Pancreas (tissue), 10 donors: ENCODE measurements at regions of chr7 and their contacts with region 1.

Region 1: GRCh38 chr7:32479574-32480200 is 10.5 kb downstream of the LSM5 start:
- DNase-seq: no peak
- ATAC-seq: peak; percentile 42 to 70 (median 64)
- H3K4me3 ChIP-seq: no peak overlapping the region
- H3K27ac ChIP-seq: no peak overlapping the region
- H3K4me1 ChIP-seq: peaks cover 4 to 8% (median 7%) of the 10 kb centered on the region in 3 donors
- H3K27me3 ChIP-seq: no peaks in the 10 kb centered on the region
- CTCF ChIP-seq: peak; percentile 29 to 72 (median 58)

Region 2: GRCh38 chr7:31919678-31920369 is 559.9 kb before region 1 on chr7:
- intact Hi-C with region 1: no loop called
- DNase-seq: no peak
- ATAC-seq: no peak
- H3K4me3 ChIP-seq: no peak overlapping the region
- H3K27ac ChIP-seq: no peak overlapping the region
- H3K4me1 ChIP-seq: peaks cover 0 to 7% (median 0%) of the 10 kb centered on the region in 3 donors
- H3K27me3 ChIP-seq: no peaks in the 10 kb centered on the region
- CTCF ChIP-seq: no peak

Region 3: GRCh38 chr7:32137059-32137458 is 342.6 kb before region 1 on chr7:
- intact Hi-C with region 1: no loop called
- DNase-seq: no peak
- ATAC-seq: no peak
- H3K4me3 ChIP-seq: no peak overlapping the region
- H3K27ac ChIP-seq: no peak overlapping the region
- H3K4me1 ChIP-seq: no peaks in the 10 kb centered on the region
- H3K27me3 ChIP-seq: no peaks in the 10 kb centered on the region
- CTCF ChIP-seq: no peak

Region 4: DNA sequence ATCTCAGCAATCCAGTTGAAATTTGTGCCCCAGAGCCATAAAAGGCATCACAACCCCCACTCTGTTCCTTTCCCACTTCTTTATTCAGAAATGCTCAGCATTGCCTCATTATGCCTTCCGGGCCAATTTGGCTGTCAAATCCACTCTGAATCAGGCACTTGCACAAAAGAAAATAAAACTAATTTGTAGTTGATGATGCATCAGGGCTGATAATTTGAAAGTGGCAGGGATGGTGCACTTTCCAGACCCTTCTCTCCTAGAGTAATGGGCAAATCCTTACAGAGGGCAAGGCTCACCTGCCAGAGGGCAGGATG is 261.6 kb before region 1 on chr7:
- intact Hi-C with region 1: loop called in 1 of 3 experiments (anchors 5 kb)
- DNase-seq: no peak
- ATAC-seq: no peak
- H3K4me3 ChIP-seq: no peak overlapping the region
- H3K27ac ChIP-seq: no peak overlapping the region
- H3K4me1 ChIP-seq: no peaks in the 10 kb centered on the region
- H3K27me3 ChIP-seq: no peaks in the 10 kb centered on the region
- CTCF ChIP-seq: no peak